Activated B cell treated with CpG ODN at 0.5 μM for 24 hours (primary cell): ENCODE measurements at regions of chr14 and their contacts with region 1.

Region 1: DNA sequence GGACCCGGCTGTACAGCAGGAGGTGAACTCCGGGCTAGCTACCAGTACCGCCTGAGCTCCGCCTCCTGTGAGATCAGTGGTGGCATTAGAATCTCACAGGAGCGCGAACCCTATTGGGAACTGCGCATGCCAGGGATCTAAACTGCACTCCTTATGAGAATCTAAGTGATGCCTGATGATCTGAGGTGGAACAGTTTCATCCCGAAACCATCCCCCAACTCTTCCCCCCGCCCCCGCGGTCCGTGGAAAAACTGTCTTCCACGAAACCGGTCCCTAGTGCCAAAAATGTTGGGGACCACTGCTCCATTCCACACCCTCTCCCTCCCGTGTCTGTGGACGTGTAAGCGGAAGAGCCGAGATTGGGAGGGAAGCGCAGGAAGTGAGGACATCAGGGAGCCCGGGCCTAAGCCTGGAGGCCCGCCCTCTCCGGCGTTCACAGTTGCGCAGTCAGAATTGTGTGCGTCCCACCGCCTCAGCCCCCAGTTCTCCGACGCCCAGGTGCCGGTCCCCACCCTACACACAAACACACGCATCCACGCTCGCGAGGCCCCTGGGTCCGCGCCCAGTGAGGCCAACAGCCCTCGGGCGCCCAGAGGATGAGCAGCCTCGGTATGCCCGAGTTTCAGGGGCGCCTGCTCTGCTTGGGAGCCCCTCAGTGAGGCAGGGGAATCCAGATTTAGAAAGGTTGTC is 1.8 kb upstream of the RNASE4 start:
- DNase-seq: peak; percentile 70
- ATAC-seq: peak; percentile 59
- H3K4me3 Mint-ChIP-seq: no peak overlapping the region
- H3K27ac Mint-ChIP-seq: no peak overlapping the region
- H3K4me1 Mint-ChIP-seq: peaks cover 16% of the 10 kb centered on the region
- H3K27me3 Mint-ChIP-seq: no peaks in the 10 kb centered on the region
- CTCF ChIP-seq: no peak

Region 2: DNA sequence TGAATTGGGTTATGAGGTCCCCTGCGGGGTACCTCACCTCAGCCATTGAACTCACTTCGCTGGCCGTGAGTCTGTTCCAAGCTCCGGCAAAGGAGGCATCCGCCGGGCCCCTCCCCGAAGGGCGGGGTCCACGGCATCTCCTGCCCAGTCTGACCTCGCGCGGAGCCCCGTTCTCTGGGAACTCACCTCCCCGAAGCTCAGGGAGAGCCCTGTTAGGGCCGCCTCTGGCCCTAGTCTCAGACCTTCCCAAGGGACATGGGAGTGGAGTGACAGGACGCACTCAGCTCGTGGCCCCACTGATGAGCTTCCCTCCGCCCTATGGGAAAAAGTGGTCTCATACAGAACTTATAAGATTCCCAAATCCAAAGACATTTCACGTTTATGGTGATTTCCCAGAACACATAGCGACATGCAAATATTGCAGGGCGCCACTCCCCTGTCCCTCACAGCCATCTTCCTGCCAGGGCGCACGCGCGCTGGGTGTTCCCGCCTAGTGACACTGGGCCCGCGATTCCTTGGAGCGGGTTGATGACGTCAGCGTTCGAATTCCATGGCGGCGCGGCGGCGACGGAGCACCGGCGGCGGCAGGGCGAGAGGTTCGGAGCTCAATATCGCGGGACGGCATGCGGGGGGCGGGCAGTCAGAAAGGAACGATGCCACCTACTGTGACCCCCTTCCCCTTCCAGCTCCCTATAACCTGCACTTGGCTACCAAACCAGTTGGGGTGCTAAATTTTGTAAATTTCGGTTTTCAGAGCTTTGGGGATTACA is 339.3 kb before region 1 on chr14 and contains the start of gene PARP2:
- CTCF ChIA-PET with region 1: no interaction called
- POLR2A ChIA-PET with region 1: interaction called, 71 read pairs
- intact Hi-C with region 1: loop called (anchors 1 kb)
- DNase-seq: peak; percentile 87
- ATAC-seq: peak; percentile 87
- H3K4me3 Mint-ChIP-seq: peak within 1 kb of the TSS; percentile 98
- H3K27ac Mint-ChIP-seq: peak within 1 kb of the TSS; percentile 97
- H3K4me1 Mint-ChIP-seq: peaks cover 12% of the 10 kb centered on the region
- H3K27me3 Mint-ChIP-seq: no peaks in the 10 kb centered on the region
- CTCF ChIP-seq: no peak
- total RNA-seq, gene PARP2: 17.1 and 19.5 TPM in 2 replicates

Region 3: GRCh38 chr14:20469242-20469889 is 213.2 kb before region 1 on chr14 and contains the start of gene PNP:
- CTCF ChIA-PET with region 1: interaction called, 3 read pairs
- POLR2A ChIA-PET with region 1: interaction called, 7 read pairs
- intact Hi-C with region 1: loop called (anchors 2 kb)
- DNase-seq: peak; percentile 78
- ATAC-seq: peak; percentile 89
- H3K4me3 Mint-ChIP-seq: peak within 1 kb of the TSS; percentile 95
- H3K27ac Mint-ChIP-seq: peak within 1 kb of the TSS; percentile 93
- H3K4me1 Mint-ChIP-seq: peaks cover 42% of the 10 kb centered on the region
- H3K27me3 Mint-ChIP-seq: no peaks in the 10 kb centered on the region
- CTCF ChIP-seq: no peak
- total RNA-seq, gene PNP: 87.2 and 88.0 TPM in 2 replicates

Region 4: DNA sequence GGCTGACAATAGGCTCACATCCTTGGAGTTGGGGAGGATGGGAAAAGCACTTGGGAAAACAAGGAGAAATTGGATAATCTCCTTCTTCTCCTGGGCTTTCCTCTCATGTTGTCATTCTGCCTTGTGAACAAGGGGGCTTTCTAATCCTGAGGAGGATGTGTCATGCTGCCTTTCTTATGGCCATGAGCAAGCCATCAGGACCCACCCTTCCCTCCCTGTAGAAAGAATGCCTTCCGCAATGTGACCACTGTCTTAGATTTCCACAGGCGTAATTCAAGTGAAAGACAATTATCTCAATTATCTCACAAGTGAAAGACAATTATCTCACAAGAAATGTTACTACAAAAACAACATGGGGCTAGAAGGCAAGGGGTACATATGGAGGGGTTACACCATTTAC is 38.1 kb before region 1 on chr14:
- CTCF ChIA-PET with region 1: no interaction called
- POLR2A ChIA-PET with region 1: no interaction called
- intact Hi-C with region 1: no loop called
- DNase-seq: no peak
- ATAC-seq: no peak
- H3K4me3 Mint-ChIP-seq: no peak overlapping the region
- H3K27ac Mint-ChIP-seq: no peak overlapping the region
- H3K4me1 Mint-ChIP-seq: no peaks in the 10 kb centered on the region
- H3K27me3 Mint-ChIP-seq: peaks cover 21% of the 10 kb centered on the region
- CTCF ChIP-seq: no peak

Region 5: DNA sequence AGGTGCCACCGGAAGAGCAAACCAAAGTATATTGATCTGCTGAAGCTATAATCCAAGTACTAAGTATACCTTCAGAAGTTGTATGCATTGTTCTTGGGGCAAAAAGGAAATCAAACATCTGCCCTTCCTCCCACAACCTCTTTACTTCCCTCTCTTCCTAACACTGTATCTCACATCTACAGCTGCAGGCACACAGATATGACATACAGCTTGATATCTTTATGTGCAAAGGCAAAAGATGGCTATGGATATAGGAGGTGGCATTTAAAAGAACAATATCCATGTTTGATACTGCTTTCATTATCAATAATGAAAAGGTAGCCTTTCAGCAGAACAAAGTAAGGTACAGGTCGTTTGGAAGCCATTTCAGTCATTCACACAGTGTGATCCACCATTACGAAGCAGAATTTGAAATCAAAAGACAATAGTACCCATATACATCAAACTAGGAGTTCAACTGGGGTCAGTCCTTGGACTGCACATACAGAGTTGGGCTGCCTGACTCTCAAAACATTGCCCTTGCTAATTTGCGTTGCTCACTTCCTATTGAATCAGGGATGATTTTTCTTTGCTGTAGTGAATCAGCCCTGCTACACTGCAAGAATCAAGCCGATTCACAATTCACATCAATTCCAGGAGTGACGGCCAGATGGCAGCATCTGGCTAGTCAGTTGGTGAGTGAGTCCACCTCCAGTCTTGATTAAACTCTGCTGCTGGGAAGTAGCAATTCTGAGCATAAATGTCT is 14.9 kb after region 1 on chr14:
- CTCF ChIA-PET with region 1: interaction called, 10 read pairs
- POLR2A ChIA-PET with region 1: interaction called, 3 read pairs
- intact Hi-C with region 1: no loop called
- DNase-seq: peak; percentile 56
- ATAC-seq: peak; percentile 95
- H3K4me3 Mint-ChIP-seq: no peak overlapping the region
- H3K27ac Mint-ChIP-seq: no peak overlapping the region
- H3K4me1 Mint-ChIP-seq: peaks cover 4% of the 10 kb centered on the region
- H3K27me3 Mint-ChIP-seq: no peaks in the 10 kb centered on the region
- CTCF ChIP-seq: peak; percentile 94

Region 6: GRCh38 chr14:21269252-21270046 is 586.9 kb after region 1 on chr14 and contains the start of gene HNRNPC:
- CTCF ChIA-PET with region 1: no interaction called
- POLR2A ChIA-PET with region 1: no interaction called
- intact Hi-C with region 1: loop called (anchors 5 kb)
- DNase-seq: peak; percentile 100
- ATAC-seq: peak; percentile 87
- H3K4me3 Mint-ChIP-seq: peak within 1 kb of the TSS; percentile 100
- H3K27ac Mint-ChIP-seq: peak within 1 kb of the TSS; percentile 100
- H3K4me1 Mint-ChIP-seq: peaks cover 48% of the 10 kb centered on the region
- H3K27me3 Mint-ChIP-seq: no peaks in the 10 kb centered on the region
- CTCF ChIP-seq: no peak
- total RNA-seq, gene HNRNPC: 653 and 683 TPM in 2 replicates